Posterior vena cava (tissue), 2 donors: ENCODE measurements at regions of chr5 and their contacts with region 1.

Region 1: DNA sequence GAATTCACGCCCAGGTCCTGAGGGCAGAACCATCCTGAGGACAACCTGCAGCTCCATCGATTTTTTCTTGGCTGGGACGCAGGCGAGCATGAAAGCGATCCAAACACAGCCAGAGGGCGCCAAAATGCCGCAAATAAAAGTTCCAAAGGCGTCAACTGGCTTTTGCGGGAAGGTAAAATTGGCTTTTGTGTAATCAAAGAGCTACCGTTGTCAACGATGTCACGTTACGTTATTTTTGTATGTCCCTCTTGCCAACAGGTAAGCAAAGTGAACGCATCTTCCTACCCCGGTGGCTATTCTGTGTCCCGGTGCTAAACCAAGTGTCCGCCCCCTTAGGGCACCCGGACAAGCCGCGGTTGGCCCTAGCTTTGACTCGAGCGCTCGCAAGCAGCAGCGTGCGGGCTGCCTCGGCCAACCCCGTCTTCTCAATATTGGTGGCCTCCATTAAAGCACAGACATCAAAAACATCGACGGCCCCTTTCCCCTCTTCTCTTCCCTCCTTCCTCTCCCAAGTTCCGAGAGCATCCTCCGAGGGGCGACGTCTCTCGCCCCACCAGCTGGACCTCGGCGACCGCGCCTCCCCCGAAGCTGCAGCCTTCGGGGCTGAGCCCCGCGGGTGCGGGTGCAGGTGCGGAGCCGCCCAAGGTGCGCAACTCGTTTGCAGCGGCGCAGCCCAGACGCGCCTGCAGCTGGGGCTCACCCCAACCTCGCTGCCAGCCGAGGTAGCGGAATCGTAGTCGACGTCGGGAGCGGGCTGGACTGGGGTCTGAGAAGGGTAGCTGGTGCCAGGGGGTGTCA is 1.1 kb upstream of the BASP1 start:
- DNase-seq: peak; percentile 91

Region 2: GRCh38 chr5:17000291-17000939 is 216.0 kb before region 1 on chr5:
- intact Hi-C with region 1: no loop called
- DNase-seq: no peak

Region 3: DNA sequence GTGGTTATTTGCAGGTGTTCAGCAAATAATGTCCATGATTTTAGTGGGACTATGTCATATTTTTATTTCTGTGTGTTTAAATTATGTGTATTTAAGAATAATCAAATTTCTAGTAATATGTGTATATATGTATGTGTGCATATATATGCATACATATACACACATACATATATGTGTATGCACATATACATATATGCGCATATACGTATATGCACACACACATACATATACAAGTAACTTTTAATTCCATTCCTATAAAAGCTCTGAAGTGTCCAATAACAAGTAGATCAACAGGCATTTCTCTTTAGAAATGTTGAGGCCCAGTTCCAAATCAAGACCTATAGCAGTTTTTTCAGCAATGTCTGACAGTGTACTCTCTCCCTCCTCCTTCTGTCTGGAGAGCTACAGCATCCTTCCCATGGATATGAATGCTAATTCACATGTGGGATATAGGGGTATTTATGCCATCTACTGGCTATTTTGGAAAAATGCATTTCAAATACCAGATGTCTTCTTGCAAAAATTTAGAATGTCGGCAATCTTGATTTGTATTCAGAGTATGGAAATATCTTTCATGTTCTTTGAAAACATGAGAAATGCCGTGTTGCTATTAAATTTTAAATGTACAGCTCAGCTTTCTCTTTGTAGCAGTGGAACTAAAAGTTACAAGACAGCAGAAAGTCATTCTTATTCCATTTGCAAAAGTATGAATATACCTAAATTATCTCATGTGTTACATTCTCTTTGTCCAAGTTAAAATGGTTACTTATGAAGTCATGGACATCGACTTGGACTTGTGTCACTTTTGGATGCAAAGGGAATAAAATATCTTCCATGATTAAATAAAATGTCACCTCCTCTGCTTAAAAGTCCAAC is 1065.5 kb after region 1 on chr5:
- intact Hi-C with region 1: loop called in 1 of 2 experiments (anchors 10 kb)
- DNase-seq: no peak